ENCODE measurements at regions of chr6 and their contacts with region 1.

Region 1: DNA sequence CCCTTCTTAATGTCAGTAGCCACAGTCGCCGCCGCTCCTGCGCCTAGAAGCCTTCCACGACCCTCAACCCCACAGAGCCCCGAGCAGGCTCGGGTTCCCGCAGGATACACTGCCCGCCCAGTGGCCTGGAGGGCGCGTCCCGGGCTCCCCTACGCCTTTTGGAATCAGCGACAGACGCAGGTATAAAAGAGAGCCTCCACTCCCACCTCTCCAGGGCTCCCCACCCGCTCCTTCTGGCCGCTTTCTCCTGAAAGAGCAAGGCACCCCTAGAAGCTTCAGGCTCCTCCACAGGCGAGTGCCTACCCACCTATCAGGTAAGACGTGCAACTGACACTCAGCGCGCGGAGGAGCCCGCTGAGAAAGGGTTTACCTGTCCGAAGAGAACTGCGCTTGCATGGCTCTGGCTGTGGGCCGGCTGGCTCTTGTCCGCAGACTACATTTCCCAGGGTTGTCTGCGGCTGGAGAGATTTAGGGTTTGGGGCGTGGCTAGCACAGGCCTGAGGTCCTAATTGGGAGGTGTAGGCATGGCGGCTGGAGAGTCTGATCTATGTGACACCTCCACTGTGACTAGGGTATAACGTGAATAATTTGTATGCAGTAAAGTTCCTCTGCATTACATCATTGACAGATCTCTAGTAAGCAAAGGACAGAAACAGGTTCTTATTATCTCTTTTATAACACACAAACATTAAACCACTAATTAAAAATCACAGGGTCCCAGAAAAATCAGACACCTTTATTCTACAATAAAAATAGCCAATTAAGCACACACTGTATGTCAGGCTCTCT is 13.5 kb upstream of the ZNF391 start:
- DNase-seq: peak; percentile 44
- ATAC-seq: peak; percentile 100
- H3K4me3 Mint-ChIP-seq: peak overlapping the region; percentile 85
- H3K27ac Mint-ChIP-seq: peak overlapping the region; percentile 71
- H3K4me1 Mint-ChIP-seq: peaks cover 14% of the 10 kb centered on the region
- H3K27me3 Mint-ChIP-seq: peaks cover 16% of the 10 kb centered on the region
- CTCF ChIP-seq: no peak

Region 2: DNA sequence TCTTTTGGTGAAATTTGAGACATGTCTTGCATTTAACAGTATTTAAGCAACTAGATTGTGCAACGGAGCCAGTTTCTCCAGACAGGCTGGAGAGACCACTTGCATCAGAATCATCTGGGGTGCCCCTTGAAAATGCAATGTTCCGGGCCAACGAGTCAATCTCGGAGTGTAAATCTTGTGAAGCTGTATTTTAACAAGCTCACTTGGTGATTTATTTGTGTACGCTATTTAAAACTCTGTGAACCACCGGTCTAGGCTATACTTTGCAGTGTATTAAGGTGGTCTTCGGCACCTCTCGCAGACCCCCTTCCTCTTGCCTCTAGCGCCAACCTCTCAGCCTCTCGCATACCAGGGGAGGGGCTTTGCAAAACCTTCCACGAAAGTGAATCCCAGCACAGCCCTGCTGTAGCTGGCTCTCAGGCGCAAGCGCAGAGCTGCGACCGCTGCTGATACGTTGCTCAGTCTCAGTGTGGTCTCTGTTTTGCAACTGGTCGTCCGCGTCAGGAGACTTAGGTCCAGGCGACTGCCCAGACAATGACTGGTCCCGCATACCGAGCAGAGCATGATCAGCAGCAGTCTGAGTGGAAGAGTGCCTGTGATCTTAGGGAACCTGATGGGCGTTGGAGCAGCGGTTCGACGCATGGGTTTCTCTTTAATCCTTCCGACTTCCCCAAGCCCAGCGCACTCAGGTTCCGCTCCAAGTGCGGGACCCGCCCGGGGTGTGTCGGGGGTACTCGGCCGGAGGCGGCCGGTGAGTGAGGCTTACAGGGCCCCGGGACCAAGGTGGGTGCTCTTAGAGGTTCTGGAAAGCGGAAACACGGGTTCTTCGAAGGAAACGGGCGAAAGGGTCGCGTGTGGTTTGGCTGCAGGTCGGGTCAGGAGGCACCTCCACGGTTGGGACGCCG is 13.5 kb after region 1 on chr6 and contains the start of gene ZNF391:
- CTCF ChIA-PET with region 1: no interaction called
- POLR2A ChIA-PET with region 1: interaction called, 7 read pairs
- intact Hi-C with region 1: loop called (anchors 1 kb)
- DNase-seq: peak; percentile 73
- ATAC-seq: peak; percentile 88
- H3K4me3 Mint-ChIP-seq: peak within 1 kb of the TSS; percentile 97
- H3K27ac Mint-ChIP-seq: peak within 1 kb of the TSS; percentile 95
- H3K4me1 Mint-ChIP-seq: peaks cover 13% of the 10 kb centered on the region
- H3K27me3 Mint-ChIP-seq: no peaks in the 10 kb centered on the region
- CTCF ChIP-seq: no peak
- total RNA-seq, gene ZNF391: 4.8 and 5.9 TPM in 2 replicates

Measured in activated B cell treated with CpG ODN at 0.5 μM for 24 hours (primary cell).